ENCODE measurements at regions of chr5 and their contacts with region 1.

Region 1: DNA sequence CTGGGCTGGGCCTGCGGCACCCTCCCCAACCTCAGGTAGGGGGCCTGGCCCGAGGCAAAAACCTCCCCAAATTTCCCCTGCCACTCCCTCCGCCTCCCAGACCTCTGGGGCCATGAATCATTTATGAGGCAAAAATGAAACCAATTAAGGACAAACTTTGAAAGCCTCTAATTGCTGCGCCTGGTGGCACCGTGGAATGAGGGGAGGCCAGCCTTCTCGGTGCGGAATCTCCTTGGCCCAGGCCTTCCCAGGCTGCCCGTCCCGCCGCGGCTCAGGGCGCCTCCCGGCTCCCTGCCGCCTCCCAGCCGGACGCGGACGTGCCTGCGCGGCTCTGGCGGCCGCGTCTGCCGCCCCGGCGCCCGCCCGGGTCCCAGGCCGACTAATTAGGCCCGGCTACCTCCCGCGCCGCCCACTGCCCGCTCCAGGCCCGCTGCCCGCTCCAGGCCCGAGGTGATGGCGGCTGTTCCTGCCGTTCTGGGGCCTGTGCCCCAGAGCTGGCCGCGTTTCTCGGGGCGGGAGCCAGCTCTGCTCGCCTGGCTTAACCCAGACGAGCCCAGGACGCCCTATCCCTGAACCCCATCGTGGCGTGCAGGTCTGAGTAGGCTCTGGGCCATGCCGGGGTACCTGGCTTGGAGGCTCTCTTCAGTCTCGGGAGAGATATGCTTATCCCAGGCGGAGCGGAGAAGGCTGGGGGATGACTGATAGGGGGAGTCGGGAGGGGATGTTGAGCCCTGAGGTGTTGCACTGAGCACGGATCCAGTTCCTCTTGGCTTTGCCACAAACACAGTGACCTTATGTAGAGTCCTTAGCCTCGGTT is 20.1 kb downstream of the CXXC5 start:
- DNase-seq: peak in 4 of 9 donors; percentile 21 to 48 (median 25)
- ATAC-seq: peak; percentile 14
- H3K4me3 ChIP-seq: peak overlapping the region; percentile 46
- H3K4me3 Mint-ChIP-seq: peak overlapping the region; percentile 60 to 86 (median 78)
- H3K27ac ChIP-seq: peak overlapping the region; percentile 46
- H3K27ac Mint-ChIP-seq: peak overlapping the region in 2 of 9 donors; percentile 31 to 89
- H3K4me1 ChIP-seq: peaks cover 36% of the 10 kb centered on the region in 2 donors
- H3K4me1 Mint-ChIP-seq: peaks cover 7 to 51% (median 34%) of the 10 kb centered on the region in 7 donors
- H3K27me3 ChIP-seq: peaks cover 0 to 3% of the 10 kb centered on the region in 2 donors
- H3K27me3 Mint-ChIP-seq: peaks cover 0 to 4% (median 3%) of the 10 kb centered on the region in 5 donors

Region 2: DNA sequence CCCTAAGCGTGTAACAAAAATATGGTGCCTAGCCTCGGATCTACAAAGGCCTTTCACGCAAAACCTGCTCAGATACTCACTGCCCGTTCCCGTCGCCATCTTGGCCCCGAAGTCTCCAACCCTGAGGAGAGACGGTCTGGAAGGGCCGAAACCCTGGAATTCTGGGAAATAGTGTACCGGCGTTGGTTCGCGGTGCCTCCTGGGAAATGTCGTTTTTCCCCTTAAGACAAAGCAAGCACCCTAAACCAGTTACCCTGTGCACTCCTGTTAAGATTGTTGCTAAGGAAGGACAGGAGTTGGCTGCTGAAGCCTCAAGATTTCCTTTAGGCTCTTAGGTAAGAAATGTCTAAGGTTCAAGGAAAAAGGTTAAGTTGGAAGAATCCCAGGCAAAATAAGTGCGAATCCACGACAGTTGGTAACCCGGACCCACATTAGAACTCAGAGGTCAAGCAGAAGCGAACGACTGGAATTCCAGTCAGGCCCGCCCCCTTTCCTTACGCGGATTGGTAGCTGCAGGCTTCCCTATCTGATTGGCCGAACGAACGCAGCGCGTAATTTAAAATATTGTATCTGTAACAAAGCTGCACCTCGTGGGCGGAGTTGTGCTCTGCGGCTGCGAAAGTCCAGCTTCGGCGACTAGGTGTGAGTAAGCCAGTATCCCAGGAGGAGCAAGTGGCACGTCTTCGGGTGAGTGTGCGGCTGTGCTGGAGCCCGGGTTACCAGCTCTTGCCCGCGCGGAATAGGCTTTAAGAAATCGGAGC is 1489.6 kb before region 1 on chr5 and contains the starts of genes BRD8 and KIF20A:
- CTCF ChIA-PET with region 1: no interaction called
- POLR2A ChIA-PET with region 1: no interaction called
- intact Hi-C with region 1: no loop called
- DNase-seq: peak; percentile 62 to 89 (median 84)
- ATAC-seq: peak; percentile 92
- H3K4me3 ChIP-seq: peak within 1 kb of the TSS; percentile 85
- H3K4me3 Mint-ChIP-seq: peak within 1 kb of the TSS in 2 of 10 donors; percentile 23 to 51
- H3K27ac ChIP-seq: peak within 1 kb of the TSS; percentile 74
- H3K27ac Mint-ChIP-seq: peak within 1 kb of the TSS in 2 of 9 donors; percentile 38 to 60
- H3K4me1 ChIP-seq: peaks cover 10 to 15% of the 10 kb centered on the region in 2 donors
- H3K4me1 Mint-ChIP-seq: peaks cover 0 to 45% (median 17%) of the 10 kb centered on the region in 7 donors
- H3K27me3 ChIP-seq: no peaks in the 10 kb centered on the region
- H3K27me3 Mint-ChIP-seq: no peaks in the 10 kb centered on the region
- total RNA-seq, gene BRD8: 24.7 to 81.9 (median 66.1) TPM
- total RNA-seq, gene KIF20A: 0.29 to 34.1 TPM in 2 of 5 experiments, not detected in the others

Region 3: GRCh38 chr5:139215107-139215975 is 452.9 kb before region 1 on chr5:
- CTCF ChIA-PET with region 1: no interaction called
- POLR2A ChIA-PET with region 1: no interaction called
- intact Hi-C with region 1: no loop called
- DNase-seq: no peak
- ATAC-seq: no peak
- H3K4me3 ChIP-seq: no peak overlapping the region
- H3K4me3 Mint-ChIP-seq: no peak overlapping the region
- H3K27ac ChIP-seq: no peak overlapping the region
- H3K27ac Mint-ChIP-seq: no peak overlapping the region
- H3K4me1 ChIP-seq: no peaks in the 10 kb centered on the region
- H3K4me1 Mint-ChIP-seq: peaks cover 0 to 11% (median 0%) of the 10 kb centered on the region in 7 donors
- H3K27me3 ChIP-seq: no peaks in the 10 kb centered on the region
- H3K27me3 Mint-ChIP-seq: no peaks in the 10 kb centered on the region

Region 4: DNA sequence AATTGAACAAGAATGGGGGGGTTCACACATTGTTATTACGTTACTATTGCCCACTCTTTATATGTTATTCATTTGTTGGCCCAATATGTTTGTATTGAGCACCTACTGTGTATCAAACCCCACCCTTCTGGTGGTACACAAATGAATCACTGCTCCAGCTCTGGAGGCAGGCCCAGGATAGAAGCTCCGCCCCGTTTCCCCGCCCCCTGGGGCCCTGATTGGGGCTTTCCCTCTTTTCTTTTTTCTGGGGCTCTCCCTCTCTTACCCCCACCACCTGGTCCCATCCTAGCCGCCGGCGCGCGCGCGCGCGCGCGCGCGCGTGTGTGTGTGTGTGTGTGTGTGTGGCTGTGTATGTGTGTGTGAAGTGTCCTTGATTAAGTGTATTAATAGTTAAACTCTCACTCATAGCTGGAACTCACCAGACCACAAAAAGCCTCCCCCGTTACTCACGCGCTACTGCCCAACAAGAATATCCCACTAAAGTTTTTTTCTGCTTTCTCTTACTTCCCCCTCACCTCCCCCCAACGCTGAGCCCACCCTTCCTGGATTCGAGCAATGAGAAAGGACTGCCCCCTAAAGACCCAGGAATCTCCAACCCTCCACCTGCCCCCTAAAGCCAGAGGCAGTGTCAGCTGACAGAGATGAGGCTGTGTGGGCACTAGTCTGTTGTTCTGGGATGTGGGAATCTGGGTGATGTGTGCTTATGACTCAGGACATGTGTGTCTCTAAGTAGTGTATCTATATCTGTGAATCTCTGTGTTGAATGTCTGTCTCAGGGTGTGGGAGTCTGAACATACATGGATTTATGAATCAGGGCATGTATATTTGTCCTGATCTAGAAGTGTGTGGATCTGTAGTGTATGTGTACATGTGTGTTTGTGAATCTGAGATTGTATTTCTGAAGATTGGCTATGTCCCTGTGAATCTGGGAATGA is 16.2 kb before region 1 on chr5:
- CTCF ChIA-PET with region 1: interaction called, 5 read pairs
- POLR2A ChIA-PET with region 1: no interaction called
- intact Hi-C with region 1: loop called (anchors 2 kb)
- DNase-seq: peak in 3 of 9 donors; percentile 39 to 63 (median 54)
- ATAC-seq: peak; percentile 66
- H3K4me3 ChIP-seq: no peak overlapping the region
- H3K4me3 Mint-ChIP-seq: peak overlapping the region in 6 of 10 donors; percentile 5 to 94 (median 20)
- H3K27ac ChIP-seq: no peak overlapping the region
- H3K27ac Mint-ChIP-seq: peak overlapping the region in 1 of 9 donors; percentile 3
- H3K4me1 ChIP-seq: peaks cover 19 to 33% of the 10 kb centered on the region in 2 donors
- H3K4me1 Mint-ChIP-seq: peaks cover 12 to 44% (median 35%) of the 10 kb centered on the region in 7 donors
- H3K27me3 ChIP-seq: peaks cover 3 to 30% of the 10 kb centered on the region in 2 donors
- H3K27me3 Mint-ChIP-seq: peaks cover 36 to 58% (median 45%) of the 10 kb centered on the region in 5 donors